ENCODE measurements at regions of chr12 and their contacts with region 1.

Region 1: DNA sequence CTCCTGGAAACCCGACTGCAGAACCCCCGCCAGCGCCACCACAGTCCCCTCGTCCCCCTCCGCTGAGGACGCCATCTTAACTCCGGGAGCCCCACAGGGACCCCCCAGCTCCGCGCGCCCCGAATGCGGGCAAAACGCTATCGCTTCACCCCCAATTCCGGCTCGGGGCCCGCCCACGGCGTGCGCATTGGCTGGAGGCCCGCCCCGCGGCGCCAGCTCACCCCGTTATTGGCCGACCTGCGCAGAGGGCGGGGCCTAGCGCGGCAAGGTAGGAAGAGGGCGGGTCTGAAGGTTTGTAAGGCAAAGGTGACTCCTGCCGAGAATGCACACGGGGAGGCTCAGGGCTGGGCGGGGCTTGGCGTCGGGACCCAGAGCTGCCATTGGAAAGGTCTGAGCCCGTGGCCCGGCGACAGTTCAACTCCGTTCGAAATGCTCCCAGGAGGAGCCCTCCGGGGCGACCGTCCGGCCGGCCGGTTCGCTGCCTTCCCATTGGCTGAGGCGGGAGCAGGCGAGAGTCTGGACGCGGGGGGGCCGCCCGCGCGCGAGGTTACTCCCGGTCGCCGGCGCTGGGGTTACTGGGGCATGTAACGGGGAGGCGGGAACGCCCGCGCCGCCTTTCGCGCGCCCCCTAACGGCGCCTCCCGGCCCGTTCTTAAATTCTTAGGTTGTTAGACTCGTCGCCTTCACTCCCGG is at the start of gene LPCAT3:
- DNase-seq: peak; percentile 97
- CTCF ChIP-seq: peak; percentile 83

Region 2: DNA sequence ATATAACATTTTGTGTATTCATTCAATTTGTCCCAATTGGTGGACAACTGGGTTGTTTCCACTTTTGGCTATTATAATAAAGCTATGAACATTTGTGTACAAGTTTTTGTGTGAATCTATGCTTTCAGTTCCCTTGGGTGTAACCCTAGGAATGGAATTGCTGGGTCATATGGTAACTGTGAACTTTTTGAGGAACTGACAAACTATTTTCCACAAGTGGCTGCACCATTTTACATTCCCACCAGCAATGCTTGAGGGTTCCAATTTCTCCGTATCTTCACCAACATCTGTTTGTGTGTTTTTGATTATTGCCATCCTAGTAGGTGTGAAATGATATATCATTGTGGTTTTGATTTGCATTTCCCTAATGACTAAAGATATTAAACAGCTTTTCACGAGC is 13.2 kb before region 1 on chr12:
- CTCF ChIA-PET with region 1: interaction called, 21 read pairs
- POLR2A ChIA-PET with region 1: interaction called, 4 read pairs
- DNase-seq: no peak
- CTCF ChIP-seq: no peak

Region 3: GRCh38 chr12:7034464-7034863 is 16.0 kb after region 1 on chr12:
- CTCF ChIA-PET with region 1: interaction called, 18 read pairs
- POLR2A ChIA-PET with region 1: no interaction called
- DNase-seq: no peak
- CTCF ChIP-seq: no peak

Measured in GM10248 (cell line).